ENCODE measurements at regions of chr1 and their contacts with region 1.

Region 1: GRCh38 chr1:89918127-89918793 is 76.7 kb upstream of the ZNF326 start:
- DNase-seq: no peak
- H3K4me3 ChIP-seq: no peak overlapping the region
- H3K27ac ChIP-seq: no peak overlapping the region
- H3K4me1 ChIP-seq: peaks cover under 1% of the 10 kb centered on the region
- CTCF ChIP-seq: no peak

Region 2: GRCh38 chr1:89898695-89899470 is 19.4 kb before region 1 on chr1:
- CTCF ChIA-PET with region 1: no interaction called
- POLR2A ChIA-PET with region 1: interaction called, 10 read pairs
- intact Hi-C with region 1: loop called (anchors 2 kb)
- DNase-seq: no peak
- H3K4me3 ChIP-seq: no peak overlapping the region
- H3K27ac ChIP-seq: no peak overlapping the region
- H3K4me1 ChIP-seq: peaks cover 2% of the 10 kb centered on the region
- CTCF ChIP-seq: no peak

Measured in OCI-LY7 (cell line).